Caco-2 (cell line): ENCODE measurements at regions of chr12 and their contacts with region 1.

Region 1: GRCh38 chr12:31117203-31118011 is 43.7 kb downstream of the DDX11 start:
- DNase-seq: peak in 1 of 2 experiments; percentile 79
- H3K4me3 ChIP-seq: peak overlapping the region; percentile 40
- H3K4me3 Mint-ChIP-seq: peak overlapping the region; percentile 69
- H3K27ac Mint-ChIP-seq: no peak overlapping the region
- H3K4me1 ChIP-seq: peaks cover 17% of the 10 kb centered on the region
- H3K4me1 Mint-ChIP-seq: no peaks in the 10 kb centered on the region
- H3K27me3 ChIP-seq: peaks cover 3% of the 10 kb centered on the region; the same call in 1 of the 2 replicates
- H3K27me3 Mint-ChIP-seq: peaks cover 7% of the 10 kb centered on the region
- CTCF ChIP-seq: peak; percentile 86 to 92

Region 2: DNA sequence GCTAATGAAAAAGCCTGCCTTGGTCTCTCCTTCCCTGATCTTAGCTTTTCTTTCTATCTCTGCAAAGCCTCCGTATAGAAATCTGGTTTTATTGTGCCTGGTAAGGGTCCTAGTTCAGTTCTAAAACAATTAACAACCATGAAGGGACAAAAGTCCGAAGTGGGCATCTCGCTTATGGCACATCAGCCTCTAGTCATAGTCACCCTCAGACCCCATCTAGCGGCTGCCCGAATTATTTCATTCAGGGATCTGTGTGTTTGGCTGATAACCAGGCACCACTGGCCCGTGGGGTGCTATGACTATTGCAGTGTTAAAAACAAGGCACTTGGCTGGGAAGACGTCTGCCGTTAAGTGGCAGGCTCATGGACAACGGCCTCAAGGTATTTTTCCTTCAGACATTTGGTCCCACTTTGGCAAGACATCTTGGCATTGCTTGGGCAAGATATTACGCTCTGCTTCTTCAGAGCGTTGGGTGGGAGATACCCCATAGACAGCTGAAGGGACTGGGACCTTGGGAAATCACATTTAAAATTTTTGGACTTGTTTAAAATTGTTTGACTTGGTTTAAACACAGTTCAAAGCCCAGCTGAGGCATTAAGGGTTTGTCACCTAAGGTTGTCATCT is 121.5 kb after region 1 on chr12:
- CTCF ChIA-PET with region 1: no interaction called
- POLR2A ChIA-PET with region 1: no interaction called
- intact Hi-C with region 1: loop called (anchors 1 kb)
- DNase-seq: peak; percentile 81 to 84
- H3K4me3 ChIP-seq: no peak overlapping the region
- H3K4me3 Mint-ChIP-seq: no peak overlapping the region
- H3K27ac Mint-ChIP-seq: no peak overlapping the region
- H3K4me1 ChIP-seq: no peaks in the 10 kb centered on the region
- H3K4me1 Mint-ChIP-seq: peaks cover 10% of the 10 kb centered on the region
- H3K27me3 ChIP-seq: no peaks in the 10 kb centered on the region
- H3K27me3 Mint-ChIP-seq: peaks cover 17% of the 10 kb centered on the region
- CTCF ChIP-seq: peak; percentile 83 to 87